ENCODE measurements at regions of chr1 and their contacts with region 1.

Region 1: DNA sequence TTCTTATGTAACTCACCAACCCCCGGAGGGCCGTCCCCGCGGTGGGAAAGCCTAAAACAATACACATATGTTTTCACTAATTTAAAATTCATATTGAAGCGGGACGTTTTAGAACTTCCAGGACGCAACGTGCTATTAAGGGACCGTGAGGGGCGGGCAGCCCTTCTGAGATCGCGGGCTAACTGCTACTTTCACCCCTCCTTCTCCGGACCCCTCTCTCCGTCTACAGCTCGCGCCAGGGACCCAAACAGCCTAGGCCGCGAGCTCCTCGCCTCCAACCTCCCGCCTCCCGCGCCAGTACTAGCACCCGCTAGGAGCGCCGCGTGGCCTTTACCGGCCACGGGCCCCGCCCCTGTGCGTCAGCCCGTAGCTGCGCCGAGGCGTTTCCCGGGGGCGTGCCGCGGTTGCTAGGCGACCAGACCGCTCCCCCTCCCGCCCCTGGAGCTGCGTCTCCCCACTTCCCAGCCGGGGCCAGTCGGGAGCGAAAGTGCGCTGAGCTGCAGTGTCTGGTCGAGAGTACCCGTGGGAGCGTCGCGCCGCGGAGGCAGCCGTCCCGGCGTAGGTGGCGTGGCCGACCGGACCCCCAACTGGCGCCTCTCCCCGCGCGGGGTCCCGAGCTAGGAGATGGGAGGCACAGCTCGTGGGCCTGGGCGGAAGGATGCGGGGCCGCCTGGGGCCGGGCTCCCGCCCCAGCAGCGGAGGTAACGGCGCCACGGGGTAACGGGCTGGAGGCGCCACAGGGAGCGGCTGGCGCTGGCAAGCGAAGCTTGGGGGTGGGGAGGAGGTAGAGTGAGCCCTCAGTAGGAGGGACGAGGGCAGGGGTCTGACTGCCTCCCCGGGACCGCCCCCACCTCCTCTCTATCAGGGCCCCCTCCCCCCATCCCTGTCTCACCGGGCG is at the start of gene DYRK3:
- DNase-seq: peak; percentile 96 to 98 (median 97)
- H3K4me3 ChIP-seq: peak within 1 kb of the TSS; percentile 95
- H3K27ac ChIP-seq: peak within 1 kb of the TSS; percentile 48 to 78
- H3K4me1 ChIP-seq: peaks cover 1% of the 10 kb centered on the region
- H3K27me3 ChIP-seq: no peaks in the 10 kb centered on the region
- CTCF ChIP-seq: peak in 1 of 3 donors; percentile 49
- EP300 ChIP-seq: peak; percentile 60
- POLR2A ChIP-seq: peak; percentile 97
- total RNA-seq, gene DYRK3: 5.5 to 15.0 (median 10.1) TPM

Region 2: DNA sequence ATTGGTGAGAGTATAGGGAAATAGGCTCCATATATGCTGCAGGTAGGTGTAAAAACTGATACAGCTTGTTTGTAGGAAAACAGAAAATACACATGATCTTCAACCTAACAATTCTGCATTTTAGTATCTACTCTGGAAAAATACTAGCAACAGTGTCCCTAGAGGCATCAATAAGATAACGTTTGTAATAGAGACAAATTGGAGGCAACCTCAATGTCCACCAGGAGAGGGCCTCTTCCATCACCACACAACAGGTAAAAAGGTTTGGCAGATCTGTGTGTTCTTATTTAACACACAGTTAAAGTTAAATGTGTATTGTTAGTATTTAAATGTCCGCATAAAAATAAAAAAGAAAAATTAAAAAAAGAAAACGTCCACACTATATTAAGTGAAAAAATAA is 28.5 kb before region 1 on chr1:
- intact Hi-C with region 1: no loop called
- DNase-seq: no peak
- H3K4me3 ChIP-seq: no peak overlapping the region
- H3K27ac ChIP-seq: no peak overlapping the region
- H3K4me1 ChIP-seq: peaks cover 2% of the 10 kb centered on the region
- H3K27me3 ChIP-seq: no peaks in the 10 kb centered on the region
- CTCF ChIP-seq: peak in 1 of 3 donors; percentile 5
- EP300 ChIP-seq: no peak
- POLR2A ChIP-seq: no peak

Region 3: GRCh38 chr1:206663832-206664652 is 28.7 kb after region 1 on chr1:
- intact Hi-C with region 1: loop called in 3 of 4 experiments (anchors 2 kb)
- DNase-seq: peak; percentile 55 to 78 (median 65)
- H3K4me3 ChIP-seq: no peak overlapping the region
- H3K27ac ChIP-seq: no peak overlapping the region
- H3K4me1 ChIP-seq: peaks cover 5% of the 10 kb centered on the region
- H3K27me3 ChIP-seq: no peaks in the 10 kb centered on the region
- CTCF ChIP-seq: peak; percentile 66 to 85 (median 81)
- EP300 ChIP-seq: no peak
- POLR2A ChIP-seq: no peak

Region 4: GRCh38 chr1:206674745-206675175 is 39.4 kb after region 1 on chr1:
- intact Hi-C with region 1: loop called in 1 of 4 experiments (anchors 5 kb)
- DNase-seq: peak; percentile 77 to 91 (median 84)
- H3K4me3 ChIP-seq: no peak overlapping the region
- H3K27ac ChIP-seq: peak overlapping the region in 1 of 2 donors; percentile 76
- H3K4me1 ChIP-seq: peaks cover 6% of the 10 kb centered on the region
- H3K27me3 ChIP-seq: no peaks in the 10 kb centered on the region
- CTCF ChIP-seq: no peak
- EP300 ChIP-seq: no peak
- POLR2A ChIP-seq: no peak

Region 5: GRCh38 chr1:206725109-206725963 is 90.0 kb after region 1 on chr1:
- intact Hi-C with region 1: loop called in 1 of 4 experiments (anchors 10 kb)
- DNase-seq: no peak
- H3K4me3 ChIP-seq: no peak overlapping the region
- H3K27ac ChIP-seq: no peak overlapping the region
- H3K4me1 ChIP-seq: peaks cover 10% of the 10 kb centered on the region
- H3K27me3 ChIP-seq: no peaks in the 10 kb centered on the region
- CTCF ChIP-seq: no peak
- EP300 ChIP-seq: no peak
- POLR2A ChIP-seq: no peak